Activated CD8-positive, alpha-beta memory T cell treated with anti-CD3 and anti-CD28 coated beads, Interleukin-2, amount 10 ng/mL, durations not matched to agents 7 days and 5 days (primary cell): ENCODE measurements at regions of chr17 and their contacts with region 1.

Region 1: DNA sequence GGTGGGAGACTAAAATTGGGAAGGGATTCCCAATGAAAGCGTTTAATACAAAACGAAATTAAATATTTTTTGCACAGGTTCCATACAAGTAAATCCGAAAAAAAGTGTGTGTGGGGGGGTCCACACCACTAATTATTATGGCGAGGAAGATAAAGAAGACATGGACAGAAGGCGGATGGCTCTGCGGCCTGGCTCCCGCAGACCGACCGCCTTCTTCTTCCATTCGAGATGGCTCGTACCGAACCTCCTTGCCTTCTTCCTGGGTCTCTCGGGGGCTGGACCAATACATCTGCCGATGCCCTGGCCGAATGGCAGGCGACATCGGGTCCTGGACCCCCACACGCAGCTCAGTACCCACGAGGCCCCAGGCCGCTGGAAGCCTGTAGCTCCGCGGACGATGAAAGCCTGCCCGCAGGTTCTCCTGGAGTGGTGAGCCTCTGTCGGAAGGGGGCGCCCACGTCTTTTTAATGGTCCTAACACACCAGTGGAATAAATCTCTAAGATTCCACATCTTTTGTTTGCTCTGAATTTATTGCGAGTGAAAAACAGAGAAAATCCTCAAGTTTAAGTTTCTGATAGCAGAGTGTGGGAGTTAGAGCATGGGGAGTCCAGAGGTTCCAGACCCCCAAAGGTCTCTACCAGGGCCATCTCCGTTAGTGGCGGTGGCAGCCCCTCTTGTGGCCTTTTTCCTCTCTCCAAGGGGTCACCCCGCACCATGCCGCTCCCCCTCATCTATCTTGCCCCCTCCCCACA is 1.4 kb downstream of the PRAC2 start:
- DNase-seq: peak; percentile 87
- ATAC-seq: peak; percentile 75
- H3K4me3 Mint-ChIP-seq: peak overlapping the region; percentile 12
- H3K27ac Mint-ChIP-seq: peak overlapping the region; percentile 77
- H3K4me1 Mint-ChIP-seq: peaks cover 25% of the 10 kb centered on the region
- H3K27me3 Mint-ChIP-seq: peaks cover 96% of the 10 kb centered on the region

Region 2: DNA sequence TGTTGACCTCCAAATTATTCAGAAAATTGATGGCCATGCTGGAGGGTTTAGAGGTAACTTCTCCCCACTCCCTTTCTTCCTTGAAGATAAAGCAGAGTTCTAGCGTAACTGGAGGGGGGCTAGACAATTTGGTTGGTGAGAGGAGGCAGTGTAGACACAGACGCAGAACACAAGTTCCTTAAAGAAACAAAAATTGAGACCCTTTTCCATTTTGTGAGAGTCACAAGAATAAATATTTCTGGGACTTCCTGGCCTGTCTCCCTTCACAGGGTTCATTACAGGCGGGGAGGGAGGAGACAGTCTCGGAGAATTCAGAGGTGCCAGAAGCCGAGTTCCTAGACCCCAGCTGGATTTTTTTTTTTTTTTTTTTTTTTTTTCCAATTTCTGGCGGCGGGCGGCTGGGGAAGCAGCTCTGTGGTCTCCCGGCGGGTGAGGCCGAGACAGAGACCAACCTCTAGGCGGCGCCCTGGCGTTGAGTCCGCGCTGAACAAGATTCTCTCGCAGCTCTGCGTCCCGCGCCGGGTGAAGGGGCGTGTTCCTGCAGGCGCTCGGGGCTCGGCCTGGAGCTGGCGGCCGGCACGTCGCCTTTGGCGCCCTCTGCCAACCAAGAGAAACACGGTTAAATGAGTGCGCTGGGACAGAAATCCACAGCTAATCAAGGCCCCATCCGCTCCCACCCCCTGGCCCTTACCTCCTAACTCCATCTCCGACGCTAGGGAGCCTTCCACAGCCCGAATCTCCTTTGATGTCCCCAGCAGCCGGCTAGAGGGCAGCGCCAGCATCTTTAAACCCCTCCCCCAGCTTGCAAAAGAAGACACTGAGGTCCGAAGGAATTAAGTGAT is 88.0 kb before region 1 on chr17:
- CTCF ChIA-PET with region 1: interaction called, 12 read pairs
- DNase-seq: peak; percentile 87
- ATAC-seq: peak; percentile 72
- H3K4me3 Mint-ChIP-seq: no peak overlapping the region
- H3K27ac Mint-ChIP-seq: no peak overlapping the region
- H3K4me1 Mint-ChIP-seq: peaks cover 34% of the 10 kb centered on the region
- H3K27me3 Mint-ChIP-seq: peaks cover 88% of the 10 kb centered on the region

Region 3: GRCh38 chr17:48738803-48739526 is 14.5 kb after region 1 on chr17:
- CTCF ChIA-PET with region 1: interaction called, 38 read pairs
- DNase-seq: no peak
- ATAC-seq: no peak
- H3K4me3 Mint-ChIP-seq: peak overlapping the region; percentile 7
- H3K27ac Mint-ChIP-seq: no peak overlapping the region
- H3K4me1 Mint-ChIP-seq: peaks cover 6% of the 10 kb centered on the region
- H3K27me3 Mint-ChIP-seq: peaks cover 99% of the 10 kb centered on the region

Region 4: DNA sequence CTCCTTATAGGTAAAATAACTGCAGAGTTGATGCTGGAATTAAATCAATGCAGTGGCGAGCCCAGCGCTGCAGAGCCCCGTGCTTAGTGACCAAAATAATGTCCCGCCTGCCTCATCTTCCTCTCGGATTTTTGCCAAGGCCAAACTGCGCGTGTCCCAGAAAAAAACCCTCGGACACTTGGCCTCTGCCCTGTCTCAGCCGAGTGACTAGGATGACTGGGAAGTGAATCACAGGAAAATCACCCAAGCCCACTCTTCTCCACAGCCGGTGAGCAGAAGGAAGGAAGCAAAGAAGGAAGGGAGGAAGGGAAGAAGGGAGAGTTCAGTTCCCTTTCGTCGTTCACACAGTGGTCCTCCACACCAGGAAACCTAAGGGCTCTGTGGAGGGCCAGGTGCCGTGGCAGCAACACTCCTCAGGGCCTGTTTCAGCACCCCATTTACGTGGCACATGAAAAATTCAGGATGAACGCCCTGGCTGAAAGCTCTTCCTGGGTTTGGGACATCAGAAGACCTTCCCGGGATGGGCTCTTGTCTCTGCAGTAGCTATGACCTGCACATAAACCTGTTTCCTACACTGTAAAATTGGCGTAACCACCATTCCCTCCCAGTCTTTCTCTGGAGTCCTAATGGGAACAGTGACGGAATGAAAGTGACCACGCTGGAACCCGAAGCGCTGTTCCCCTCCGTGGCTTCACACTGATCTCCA is 29.5 kb after region 1 on chr17:
- CTCF ChIA-PET with region 1: interaction called, 20 read pairs
- DNase-seq: no peak
- ATAC-seq: no peak
- H3K4me3 Mint-ChIP-seq: no peak overlapping the region
- H3K27ac Mint-ChIP-seq: peak overlapping the region; percentile 5
- H3K4me1 Mint-ChIP-seq: no peaks in the 10 kb centered on the region
- H3K27me3 Mint-ChIP-seq: peaks cover 92% of the 10 kb centered on the region

Region 5: DNA sequence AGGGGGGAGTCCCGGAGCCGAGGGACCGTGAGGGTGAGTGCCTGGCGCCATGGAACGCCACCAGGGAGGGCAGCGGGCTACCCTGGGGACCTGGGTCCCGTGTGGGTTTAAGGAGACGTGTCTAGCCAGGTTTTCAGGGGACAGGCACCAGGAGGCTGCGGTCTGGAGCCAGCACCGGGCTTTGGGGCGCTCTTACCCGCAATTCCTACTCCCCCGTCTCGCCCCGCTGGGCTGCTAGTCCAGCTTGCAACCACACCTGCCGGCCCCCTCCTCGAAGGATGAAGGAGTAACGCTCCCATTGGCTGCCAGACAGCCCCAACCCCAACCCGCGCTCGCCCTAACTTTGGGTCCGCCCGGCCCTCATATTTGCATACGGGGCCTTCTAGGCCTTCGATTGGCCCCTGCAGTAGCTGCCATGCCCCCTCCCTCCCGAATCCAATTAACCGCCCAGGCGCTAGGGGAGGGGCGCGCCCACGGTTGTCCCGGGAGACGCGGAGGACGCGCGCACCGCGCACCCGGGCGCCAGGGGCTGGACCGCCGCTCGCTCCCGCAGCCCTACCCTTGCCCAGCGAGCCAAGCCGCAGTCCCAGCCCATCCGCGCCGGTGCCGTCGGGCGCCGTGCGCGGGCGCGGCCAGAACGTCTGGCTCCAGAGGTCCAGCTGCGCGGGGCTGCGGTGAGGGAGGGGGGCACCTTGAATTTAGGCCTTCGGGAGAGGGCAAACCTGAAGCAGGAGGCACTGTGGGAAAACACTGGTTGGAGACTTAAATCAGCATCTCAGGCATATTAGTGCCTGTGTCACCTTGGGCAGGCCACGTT is 92.6 kb after region 1 on chr17 and contains the start of gene TTLL6:
- CTCF ChIA-PET with region 1: interaction called, 27 read pairs
- DNase-seq: peak; percentile 84
- ATAC-seq: peak; percentile 98
- H3K4me3 Mint-ChIP-seq: peak within 1 kb of the TSS; percentile 61
- H3K27ac Mint-ChIP-seq: no peak within 1 kb of the TSS
- H3K4me1 Mint-ChIP-seq: peaks cover 24% of the 10 kb centered on the region
- H3K27me3 Mint-ChIP-seq: peaks cover 62% of the 10 kb centered on the region
- total RNA-seq, gene TTLL6: not detected

Region 6: GRCh38 chr17:48927978-48928732 is 203.7 kb after region 1 on chr17:
- CTCF ChIA-PET with region 1: no interaction called
- DNase-seq: no peak
- ATAC-seq: no peak
- H3K4me3 Mint-ChIP-seq: no peak overlapping the region
- H3K27ac Mint-ChIP-seq: no peak overlapping the region
- H3K4me1 Mint-ChIP-seq: peaks cover 5% of the 10 kb centered on the region
- H3K27me3 Mint-ChIP-seq: no peaks in the 10 kb centered on the region